A673 (cell line): ENCODE measurements at regions of chr3 and their contacts with region 1.

Region 1: GRCh38 chr3:162122405-162122804 is 625.8 kb downstream of the OTOL1 start:
- DNase-seq: no peak
- H3K4me3 ChIP-seq: no peak overlapping the region
- H3K27ac ChIP-seq: no peak overlapping the region
- H3K4me1 ChIP-seq: no peaks in the 10 kb centered on the region
- H3K27me3 ChIP-seq: no peaks in the 10 kb centered on the region
- CTCF ChIP-seq: no peak

Region 2: DNA sequence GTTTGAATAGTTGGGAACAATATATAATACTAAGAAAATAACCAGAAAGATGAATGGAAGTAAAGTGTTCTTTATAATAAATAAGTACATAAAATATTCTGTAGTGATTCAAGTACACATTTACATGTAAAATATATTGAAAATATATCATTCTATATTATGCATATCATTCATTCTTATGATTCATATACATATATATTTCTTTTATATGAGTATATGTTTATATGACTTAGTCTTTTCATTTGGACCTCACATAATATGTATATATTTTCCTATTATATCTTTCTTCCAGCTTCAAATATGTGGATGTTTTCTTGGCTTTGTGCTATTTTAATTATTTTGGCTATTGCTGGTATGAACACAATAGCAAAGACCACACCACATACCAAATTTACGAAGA is 625.9 kb before region 1 on chr3 and contains the start of gene OTOL1:
- CTCF ChIA-PET with region 1: no interaction called
- POLR2A ChIA-PET with region 1: interaction called, 18 read pairs
- intact Hi-C with region 1: no loop called
- DNase-seq: no peak
- H3K4me3 ChIP-seq: no peak within 1 kb of the TSS
- H3K27ac ChIP-seq: no peak within 1 kb of the TSS
- H3K4me1 ChIP-seq: no peaks in the 10 kb centered on the region
- H3K27me3 ChIP-seq: no peaks in the 10 kb centered on the region
- CTCF ChIP-seq: no peak
- total RNA-seq, gene OTOL1: not detected in 2 replicates